ENCODE measurements at regions of chr12 and their contacts with region 1.

Region 1: DNA sequence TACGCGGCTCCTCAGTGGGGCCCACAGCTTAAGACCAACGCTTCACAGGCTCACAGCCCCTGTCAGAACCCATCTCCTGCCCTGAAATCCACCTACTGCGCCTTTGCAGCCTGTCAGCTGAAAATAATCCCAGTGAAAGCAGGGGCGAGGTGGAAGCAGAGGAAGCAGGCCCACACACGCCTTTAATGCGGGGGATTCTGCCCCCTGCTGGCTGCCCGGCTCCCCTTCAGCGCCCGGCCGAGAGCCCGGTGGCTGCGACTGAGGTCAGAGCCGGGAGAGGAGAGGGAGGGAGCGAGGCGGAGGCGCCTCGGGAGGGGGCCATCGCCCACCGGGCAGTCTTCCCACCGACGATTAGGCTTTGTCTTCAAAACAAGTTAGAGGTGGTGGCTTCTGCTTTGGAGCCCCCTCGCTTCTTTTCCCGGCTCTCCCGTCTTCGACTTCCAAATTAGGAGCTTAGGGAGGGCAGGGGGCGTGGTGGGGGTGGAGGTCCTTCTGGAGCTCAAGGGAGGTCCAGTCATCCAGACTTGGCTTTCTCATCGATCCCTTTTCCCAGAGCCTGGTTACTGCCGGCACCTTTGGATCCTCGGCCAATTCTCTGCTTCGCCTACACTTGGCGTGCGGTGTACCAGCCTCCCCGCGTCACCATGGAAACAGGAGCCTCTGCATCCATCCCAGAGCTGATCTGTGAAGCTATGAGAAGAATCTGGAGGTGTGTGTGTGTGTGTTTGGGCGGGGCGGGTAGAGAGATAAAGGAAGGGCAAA is 25.2 kb upstream of the RND1 start:
- DNase-seq: peak; percentile 92
- ATAC-seq: peak; percentile 95
- H3K4me3 Mint-ChIP-seq: peak overlapping the region; percentile 70
- H3K27ac Mint-ChIP-seq: no peak overlapping the region
- H3K4me1 Mint-ChIP-seq: peaks cover 7% of the 10 kb centered on the region
- H3K27me3 Mint-ChIP-seq: peaks cover 28% of the 10 kb centered on the region
- CTCF ChIP-seq: peak; percentile 92

Region 2: GRCh38 chr12:48640854-48641253 is 250.0 kb before region 1 on chr12:
- CTCF ChIA-PET with region 1: no interaction called
- POLR2A ChIA-PET with region 1: no interaction called
- DNase-seq: no peak
- ATAC-seq: no peak
- H3K4me3 Mint-ChIP-seq: no peak overlapping the region
- H3K27ac Mint-ChIP-seq: no peak overlapping the region
- H3K4me1 Mint-ChIP-seq: no peaks in the 10 kb centered on the region
- H3K27me3 Mint-ChIP-seq: peaks cover 15% of the 10 kb centered on the region
- CTCF ChIP-seq: no peak

Region 3: DNA sequence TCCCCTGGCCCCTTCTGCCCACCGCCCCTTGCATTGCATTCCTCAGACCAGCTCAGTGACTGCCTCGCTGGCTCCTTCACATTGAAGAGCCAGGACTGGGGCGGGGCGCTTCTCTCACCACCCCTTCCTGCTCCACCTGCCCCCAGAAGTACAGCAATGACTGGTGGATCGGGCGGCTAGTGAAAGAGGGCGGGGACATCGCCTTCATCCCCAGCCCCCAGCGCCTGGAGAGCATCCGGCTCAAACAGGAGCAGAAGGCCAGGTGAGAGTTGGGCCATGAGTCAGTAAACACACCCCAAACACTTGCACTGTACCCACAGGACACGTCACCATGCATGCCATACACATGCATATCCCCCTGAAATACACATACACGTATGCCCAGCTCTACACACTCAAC is 66.7 kb before region 1 on chr12:
- CTCF ChIA-PET with region 1: interaction called, 29 read pairs
- POLR2A ChIA-PET with region 1: no interaction called
- DNase-seq: peak; percentile 74
- ATAC-seq: peak; percentile 92
- H3K4me3 Mint-ChIP-seq: peak overlapping the region; percentile 16; the same call in 1 of the 2 replicates
- H3K27ac Mint-ChIP-seq: peak overlapping the region; percentile 58
- H3K4me1 Mint-ChIP-seq: peaks cover 29% of the 10 kb centered on the region
- H3K27me3 Mint-ChIP-seq: peaks cover 23% of the 10 kb centered on the region
- CTCF ChIP-seq: no peak

Region 4: DNA sequence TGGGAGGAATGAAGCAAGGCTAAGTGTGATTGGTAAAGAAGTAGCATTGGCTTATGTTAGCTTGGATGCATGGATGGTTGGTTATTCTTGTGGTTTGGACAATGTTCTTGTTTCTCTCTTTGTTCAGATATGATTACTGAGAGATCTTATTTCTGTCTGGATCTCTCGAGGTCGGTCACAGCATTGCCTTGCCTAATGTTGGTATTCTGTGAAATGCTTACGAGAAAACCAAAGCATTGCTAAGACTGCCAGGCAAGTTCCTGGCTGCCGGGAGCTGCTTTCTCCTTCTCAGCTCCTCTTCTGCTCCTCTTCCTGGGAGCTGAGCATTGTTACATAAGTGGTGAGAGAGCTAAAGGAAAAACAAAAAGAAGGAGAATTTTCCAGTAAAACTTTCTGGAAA is 17.7 kb before region 1 on chr12:
- CTCF ChIA-PET with region 1: interaction called, 116 read pairs
- POLR2A ChIA-PET with region 1: no interaction called
- DNase-seq: no peak
- ATAC-seq: no peak
- H3K4me3 Mint-ChIP-seq: no peak overlapping the region
- H3K27ac Mint-ChIP-seq: no peak overlapping the region
- H3K4me1 Mint-ChIP-seq: no peaks in the 10 kb centered on the region
- H3K27me3 Mint-ChIP-seq: no peaks in the 10 kb centered on the region; the same call in 1 of the 2 replicates
- CTCF ChIP-seq: no peak

Region 5: GRCh38 chr12:48924617-48925303 is 33.9 kb after region 1 on chr12:
- CTCF ChIA-PET with region 1: interaction called, 52 read pairs
- POLR2A ChIA-PET with region 1: interaction called, 3 read pairs
- DNase-seq: peak; percentile 69
- ATAC-seq: peak; percentile 69
- H3K4me3 Mint-ChIP-seq: peak overlapping the region; percentile 82
- H3K27ac Mint-ChIP-seq: peak overlapping the region; percentile 80
- H3K4me1 Mint-ChIP-seq: peaks cover 15% of the 10 kb centered on the region
- H3K27me3 Mint-ChIP-seq: no peaks in the 10 kb centered on the region; the same call in 1 of the 2 replicates
- CTCF ChIP-seq: 0 out of 2 replicates have a peak, but pooled peaks have one; percentile 15

Region 6: GRCh38 chr12:48957141-48958048 is 66.6 kb after region 1 on chr12 and contains the start of gene ARF3:
- CTCF ChIA-PET with region 1: interaction called, 12 read pairs
- POLR2A ChIA-PET with region 1: no interaction called
- DNase-seq: peak; percentile 98
- ATAC-seq: peak; percentile 89
- H3K4me3 Mint-ChIP-seq: peak within 1 kb of the TSS; percentile 95
- H3K27ac Mint-ChIP-seq: peak within 1 kb of the TSS; percentile 97
- H3K4me1 Mint-ChIP-seq: peaks cover 31% of the 10 kb centered on the region
- H3K27me3 Mint-ChIP-seq: peaks cover 7% of the 10 kb centered on the region; the same call in 1 of the 2 replicates
- CTCF ChIP-seq: no peak
- total RNA-seq, gene ARF3: 238 to 256 TPM (median 248 TPM) in 3 replicates

Region 7: DNA sequence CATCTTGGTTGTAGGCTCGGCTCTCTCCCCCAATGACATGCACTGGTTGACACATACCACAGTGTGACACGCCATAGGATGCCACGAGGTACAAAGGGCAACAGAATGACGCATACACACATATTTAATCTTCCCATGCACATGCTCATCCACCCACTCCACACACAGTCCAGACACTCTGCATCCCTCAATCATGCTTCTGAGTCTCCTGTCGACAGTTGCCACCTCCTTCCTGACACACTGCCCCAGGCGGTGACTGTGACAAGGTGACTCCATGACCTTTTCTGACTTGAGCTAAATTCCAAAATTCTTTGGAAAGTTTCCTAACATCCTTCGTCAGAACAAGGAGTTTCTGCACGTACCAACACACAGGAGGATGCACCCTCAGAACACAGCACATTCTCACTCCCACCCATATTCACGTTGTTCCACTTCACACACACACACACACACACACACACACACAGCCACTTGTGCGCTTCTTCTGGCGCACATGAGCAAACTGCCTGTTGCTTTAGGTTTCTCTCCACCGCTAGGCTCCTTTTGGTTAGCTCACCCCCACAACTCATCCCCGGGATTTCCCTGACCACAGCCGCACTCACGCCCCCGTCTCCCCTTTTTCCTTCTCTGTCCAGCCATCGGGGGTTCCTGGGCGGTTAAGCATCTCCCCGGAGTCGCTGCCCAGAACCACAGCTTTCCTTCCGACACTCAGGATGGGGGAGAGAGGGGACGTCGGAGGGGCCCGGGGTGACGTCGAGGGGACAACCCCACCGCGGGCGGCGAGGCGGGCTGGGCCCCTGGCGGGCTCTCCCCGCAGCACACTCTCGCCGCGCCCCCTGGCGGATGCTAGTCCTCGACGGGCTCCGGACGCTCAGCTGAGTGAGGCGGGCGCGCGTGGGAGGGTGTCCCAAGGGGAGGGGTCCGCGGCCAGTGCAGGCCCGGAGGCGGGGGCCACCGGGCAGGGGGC is 86.8 kb after region 1 on chr12:
- CTCF ChIA-PET with region 1: interaction called, 13 read pairs
- POLR2A ChIA-PET with region 1: interaction called, 3 read pairs
- DNase-seq: peak; percentile 75
- ATAC-seq: peak; percentile 3
- H3K4me3 Mint-ChIP-seq: peak overlapping the region; percentile 45
- H3K27ac Mint-ChIP-seq: no peak overlapping the region
- H3K4me1 Mint-ChIP-seq: peaks cover 31% of the 10 kb centered on the region
- H3K27me3 Mint-ChIP-seq: peaks cover 100% of the 10 kb centered on the region
- CTCF ChIP-seq: peak; percentile 77; the same call in 1 of the 2 replicates